Naive thymus-derived CD8-positive, alpha-beta T cell (primary cell): ENCODE measurements at regions of chr10 and their contacts with region 1.

Region 1: DNA sequence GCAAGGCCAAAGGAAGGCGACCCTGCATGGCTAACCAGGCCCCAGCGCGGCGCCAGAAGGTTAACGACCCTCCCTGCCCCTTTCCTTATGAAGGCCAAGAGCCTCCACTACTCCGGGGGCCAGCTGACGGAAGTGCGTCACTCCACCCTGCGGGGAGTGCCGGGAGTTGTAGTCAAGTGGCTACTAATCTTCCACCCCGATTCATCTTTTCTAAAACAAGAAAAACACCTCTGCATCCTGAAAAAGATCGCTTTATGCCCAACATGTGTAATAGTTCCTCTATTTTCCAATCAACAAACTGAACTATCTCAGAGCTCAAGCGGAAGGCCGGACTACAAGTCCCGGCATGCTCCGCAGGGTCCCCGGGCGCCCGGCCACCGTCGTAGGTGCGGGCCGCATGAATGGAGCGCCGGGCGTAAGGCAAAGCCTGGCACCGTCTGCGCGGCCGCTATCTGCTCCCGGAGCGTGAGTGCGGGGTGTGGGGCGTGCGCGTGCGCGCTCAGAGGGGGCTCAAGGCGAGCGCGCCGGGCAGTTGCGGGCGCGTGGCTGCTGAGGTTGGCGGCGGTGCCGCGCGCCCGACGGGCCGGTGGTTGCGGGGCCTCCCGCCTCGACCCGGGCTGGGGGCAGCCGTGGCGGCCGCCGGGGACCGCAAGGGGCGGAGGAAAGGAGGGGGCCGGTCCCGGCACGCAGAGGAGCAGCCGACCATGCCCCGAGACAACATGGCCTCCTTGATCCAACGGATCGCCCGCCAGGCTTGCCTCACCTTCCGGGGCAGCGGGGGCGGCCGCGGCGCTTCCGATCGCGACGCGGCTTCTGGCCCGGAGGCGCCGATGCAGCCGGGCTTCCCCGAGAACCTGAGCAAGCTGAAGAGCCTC is at the start of gene ADO:
- DNase-seq: peak; percentile 63 to 89 (median 78)
- ATAC-seq: peak; percentile 87 to 92
- H3K4me3 Mint-ChIP-seq: peak within 1 kb of the TSS; percentile 91 to 99 (median 96)
- H3K27ac Mint-ChIP-seq: peak within 1 kb of the TSS; percentile 96 to 100 (median 98)
- H3K4me1 Mint-ChIP-seq: peaks cover 17 to 43% (median 41%) of the 10 kb centered on the region in 4 donors
- H3K27me3 Mint-ChIP-seq: peaks cover 0 to 4% (median 0%) of the 10 kb centered on the region in 5 donors
- polyA plus RNA-seq, gene ADO: 1.7 to 3.2 (median 3.2) TPM

Region 2: DNA sequence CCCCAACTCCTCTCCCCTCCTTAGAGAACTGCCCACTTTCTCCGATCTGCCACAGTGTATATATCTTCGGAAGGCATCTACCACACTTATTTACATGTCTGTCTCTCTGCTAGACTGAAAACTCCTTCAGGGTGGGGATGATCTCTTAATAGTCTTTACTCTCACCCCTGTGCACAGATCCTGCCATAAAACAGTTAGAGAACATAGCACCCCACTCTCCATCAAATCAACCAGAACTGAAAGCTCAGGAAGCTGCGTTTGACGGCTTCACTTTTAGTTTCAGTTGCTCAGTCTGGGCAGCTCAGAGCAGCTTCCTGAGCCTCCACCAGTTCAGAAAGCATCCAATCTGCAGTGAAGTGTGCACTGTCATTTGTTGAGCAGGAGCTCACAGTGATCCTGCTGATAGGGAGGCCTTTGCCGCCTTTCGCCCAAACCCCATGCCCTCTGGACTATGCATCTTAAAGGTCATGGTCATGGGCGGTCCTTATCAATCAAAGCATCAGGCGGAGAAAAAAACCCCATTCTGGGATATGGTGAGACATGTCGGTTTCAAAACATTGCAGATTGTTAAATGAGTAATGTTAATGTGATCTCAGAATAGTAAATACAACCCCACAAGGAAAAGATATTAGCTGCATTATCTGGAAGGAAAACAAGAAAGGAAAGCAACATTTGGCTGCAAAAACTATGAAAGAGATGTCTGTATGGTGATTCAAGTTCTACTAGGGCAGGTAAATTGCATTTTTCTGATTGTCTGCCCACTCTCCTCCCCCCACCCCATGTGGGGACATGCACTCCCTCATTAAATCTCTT is 167.1 kb before region 1 on chr10:
- POLR2A ChIA-PET with region 1: interaction called, 31 read pairs
- DNase-seq: peak; percentile 8 to 81 (median 64)
- ATAC-seq: peak; percentile 92 to 93
- H3K4me3 Mint-ChIP-seq: no peak overlapping the region
- H3K27ac Mint-ChIP-seq: no peak overlapping the region
- H3K4me1 Mint-ChIP-seq: peaks cover 2 to 11% (median 6%) of the 10 kb centered on the region in 4 donors
- H3K27me3 Mint-ChIP-seq: no peaks in the 10 kb centered on the region

Region 3: DNA sequence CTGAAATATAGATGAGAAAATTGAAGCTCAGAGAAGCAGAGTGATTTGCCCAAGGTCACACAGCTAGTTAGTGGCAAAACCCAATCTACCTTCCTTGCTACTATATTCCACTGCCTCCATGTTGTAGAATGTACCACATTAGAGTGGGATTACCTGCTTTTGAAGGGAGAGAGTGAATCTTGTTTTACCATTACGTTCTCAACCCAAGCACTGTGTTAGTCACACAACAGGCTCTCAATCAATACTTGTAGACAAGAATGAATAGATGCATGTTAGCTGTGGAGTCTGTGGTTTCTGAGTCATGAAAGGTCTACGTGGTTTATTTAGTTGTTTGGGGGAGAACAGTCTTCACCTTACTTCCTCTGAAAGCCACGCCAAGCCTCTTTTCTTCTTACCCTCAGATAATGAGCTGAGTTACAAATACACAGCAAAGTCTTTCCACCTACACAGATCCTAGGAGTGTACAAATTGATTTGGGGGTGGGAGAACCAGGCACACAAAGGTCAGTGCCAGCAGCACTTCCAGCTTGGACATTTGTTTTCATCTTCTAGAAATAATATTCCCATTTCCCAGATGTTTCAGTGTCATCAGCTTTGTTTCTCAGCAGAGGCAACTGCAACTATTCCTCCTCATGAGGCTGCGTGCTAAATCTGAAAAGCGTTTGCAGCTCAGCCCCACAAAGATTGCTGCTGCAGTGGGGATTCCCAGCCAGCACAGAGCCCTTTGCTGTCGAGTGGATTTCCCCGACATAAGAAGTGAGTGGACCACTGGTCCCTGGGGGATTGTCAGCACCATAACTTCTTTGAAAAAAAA is 71.5 kb before region 1 on chr10:
- POLR2A ChIA-PET with region 1: interaction called, 18 read pairs
- DNase-seq: peak; percentile 21 to 87 (median 62)
- ATAC-seq: peak; percentile 90 to 92
- H3K4me3 Mint-ChIP-seq: peak overlapping the region in 6 of 10 donors; percentile 16 to 74 (median 52)
- H3K27ac Mint-ChIP-seq: peak overlapping the region in 3 of 10 donors; percentile 80 to 93 (median 81)
- H3K4me1 Mint-ChIP-seq: peaks cover 0 to 12% (median 6%) of the 10 kb centered on the region in 4 donors
- H3K27me3 Mint-ChIP-seq: peaks cover 2 to 33% (median 4%) of the 10 kb centered on the region in 5 donors

Region 4: DNA sequence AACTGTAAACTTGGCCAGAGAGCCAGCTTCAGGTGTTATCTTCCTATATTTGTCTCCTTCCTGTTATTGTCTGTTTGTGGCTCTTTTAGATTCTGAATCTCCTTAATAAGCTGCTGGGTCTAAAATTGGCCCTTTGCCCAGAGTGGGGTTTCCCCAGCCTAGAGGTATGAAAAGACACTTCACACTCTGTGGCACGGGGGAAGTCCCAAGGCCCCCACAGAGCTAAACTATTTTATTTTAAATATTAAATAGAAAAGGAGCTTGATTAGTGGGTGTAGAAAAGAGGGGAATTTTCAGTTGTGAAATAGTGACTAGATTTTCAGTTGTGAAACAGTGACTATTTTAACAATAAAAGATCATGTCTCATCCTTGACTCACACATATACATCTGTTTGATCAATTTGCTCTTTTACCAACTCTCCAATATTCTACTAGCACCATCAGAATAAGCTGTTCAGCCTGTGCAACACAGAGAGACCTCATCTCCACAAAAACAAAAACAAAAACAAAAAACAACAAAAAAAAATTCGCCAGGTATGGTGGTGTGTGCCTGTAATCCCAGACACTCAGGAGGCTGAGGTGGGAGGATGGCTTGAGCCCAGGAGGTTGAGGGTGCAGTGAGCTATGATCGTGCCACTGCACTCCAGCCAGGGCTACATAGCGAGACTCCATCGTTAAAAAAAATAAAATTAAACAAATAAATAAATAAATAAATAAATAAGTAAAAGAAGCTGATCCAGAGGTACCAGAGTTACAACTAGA is 24.9 kb before region 1 on chr10:
- POLR2A ChIA-PET with region 1: interaction called, 16 read pairs
- DNase-seq: peak; percentile 58 to 95 (median 84)
- ATAC-seq: peak; percentile 99
- H3K4me3 Mint-ChIP-seq: peak overlapping the region in 9 of 10 donors; percentile 2 to 61 (median 23)
- H3K27ac Mint-ChIP-seq: peak overlapping the region in 8 of 10 donors; percentile 22 to 86 (median 38)
- H3K4me1 Mint-ChIP-seq: peaks cover 8 to 27% (median 19%) of the 10 kb centered on the region in 4 donors
- H3K27me3 Mint-ChIP-seq: peaks cover 0 to 8% (median 0%) of the 10 kb centered on the region in 5 donors

Region 5: GRCh38 chr10:63133056-63133820 is 328.6 kb after region 1 on chr10 and contains the start of gene NRBF2:
- POLR2A ChIA-PET with region 1: interaction called, 10 read pairs
- DNase-seq: peak; percentile 93 to 98 (median 97)
- ATAC-seq: peak; percentile 90 to 94
- H3K4me3 Mint-ChIP-seq: peak within 1 kb of the TSS; percentile 87 to 97 (median 92)
- H3K27ac Mint-ChIP-seq: peak within 1 kb of the TSS; percentile 90 to 99 (median 96)
- H3K4me1 Mint-ChIP-seq: peaks cover 13 to 47% (median 40%) of the 10 kb centered on the region in 4 donors
- H3K27me3 Mint-ChIP-seq: peaks cover 1 to 8% (median 5%) of the 10 kb centered on the region in 5 donors
- polyA plus RNA-seq, gene NRBF2: 14.7 to 21.3 (median 16.7) TPM